Panc1 (cell line): ENCODE measurements at regions of chr7 and their contacts with region 1.

Region 1: GRCh38 chr7:47119261-47119865 is 462.5 kb downstream of the TNS3 start:
- DNase-seq: no peak
- ATAC-seq: no peak
- H3K4me3 ChIP-seq: no peak overlapping the region
- H3K27ac ChIP-seq: no peak overlapping the region
- H3K4me1 ChIP-seq: no peaks in the 10 kb centered on the region
- H3K27me3 ChIP-seq: peaks cover 8% of the 10 kb centered on the region; the same call in 1 of the 2 replicates
- CTCF ChIP-seq: no peak

Region 2: GRCh38 chr7:46089281-46089680 is 1030.1 kb before region 1 on chr7:
- CTCF ChIA-PET with region 1: no interaction called
- POLR2A ChIA-PET with region 1: no interaction called
- in situ Hi-C with region 1: no loop called
- intact Hi-C with region 1: no loop called
- DNase-seq: no peak
- ATAC-seq: no peak
- H3K4me3 ChIP-seq: no peak overlapping the region
- H3K27ac ChIP-seq: no peak overlapping the region
- H3K4me1 ChIP-seq: no peaks in the 10 kb centered on the region
- H3K27me3 ChIP-seq: no peaks in the 10 kb centered on the region
- CTCF ChIP-seq: no peak

Region 3: GRCh38 chr7:47056731-47057130 is 62.6 kb before region 1 on chr7:
- CTCF ChIA-PET with region 1: no interaction called
- POLR2A ChIA-PET with region 1: no interaction called
- in situ Hi-C with region 1: no loop called
- intact Hi-C with region 1: loop called (anchors 10 kb)
- DNase-seq: no peak
- ATAC-seq: no peak
- H3K4me3 ChIP-seq: no peak overlapping the region
- H3K27ac ChIP-seq: no peak overlapping the region
- H3K4me1 ChIP-seq: no peaks in the 10 kb centered on the region
- H3K27me3 ChIP-seq: no peaks in the 10 kb centered on the region
- CTCF ChIP-seq: no peak

Region 4: GRCh38 chr7:47635091-47636080 is 516.0 kb after region 1 on chr7:
- CTCF ChIA-PET with region 1: no interaction called
- POLR2A ChIA-PET with region 1: no interaction called
- in situ Hi-C with region 1: no loop called
- intact Hi-C with region 1: no loop called
- DNase-seq: no peak
- ATAC-seq: peak; percentile 81
- H3K4me3 ChIP-seq: peak overlapping the region; percentile 29 to 53
- H3K27ac ChIP-seq: peak overlapping the region; percentile 96
- H3K4me1 ChIP-seq: peaks cover 77% of the 10 kb centered on the region
- H3K27me3 ChIP-seq: no peaks in the 10 kb centered on the region
- CTCF ChIP-seq: no peak